A673 (cell line): ENCODE measurements at regions of chr19 and their contacts with region 1.

Region 1: GRCh38 chr19:13718733-13719132 is 45.6 kb upstream of the MRI1 start:
- DNase-seq: peak; percentile 91
- H3K4me3 ChIP-seq: no peak overlapping the region
- H3K27ac ChIP-seq: no peak overlapping the region
- H3K4me1 ChIP-seq: no peaks in the 10 kb centered on the region
- H3K27me3 ChIP-seq: no peaks in the 10 kb centered on the region
- CTCF ChIP-seq: peak; percentile 67

Region 2: DNA sequence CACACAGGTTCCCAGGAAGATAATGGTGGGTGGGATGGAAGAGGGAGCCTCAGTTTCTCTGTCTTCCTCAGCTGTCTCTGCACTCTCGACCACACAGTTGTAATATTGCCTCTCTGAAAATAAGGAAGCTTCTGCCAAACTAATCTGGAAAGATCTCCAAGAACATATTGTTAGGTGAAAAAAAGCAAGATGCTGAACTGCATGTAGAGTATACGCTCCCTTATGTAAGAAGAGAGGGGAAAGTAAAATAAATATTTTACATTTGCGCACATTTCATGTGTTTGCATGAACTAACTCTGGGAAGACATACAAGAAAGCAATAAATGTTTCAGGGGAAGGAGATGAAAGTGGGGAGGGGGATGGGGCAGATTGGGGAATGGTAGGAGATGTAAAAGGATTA is 170.6 kb before region 1 on chr19:
- CTCF ChIA-PET with region 1: no interaction called
- POLR2A ChIA-PET with region 1: no interaction called
- intact Hi-C with region 1: no loop called
- DNase-seq: no peak
- H3K4me3 ChIP-seq: no peak overlapping the region
- H3K27ac ChIP-seq: no peak overlapping the region
- H3K4me1 ChIP-seq: no peaks in the 10 kb centered on the region
- H3K27me3 ChIP-seq: peaks cover 3% of the 10 kb centered on the region
- CTCF ChIP-seq: no peak

Region 3: DNA sequence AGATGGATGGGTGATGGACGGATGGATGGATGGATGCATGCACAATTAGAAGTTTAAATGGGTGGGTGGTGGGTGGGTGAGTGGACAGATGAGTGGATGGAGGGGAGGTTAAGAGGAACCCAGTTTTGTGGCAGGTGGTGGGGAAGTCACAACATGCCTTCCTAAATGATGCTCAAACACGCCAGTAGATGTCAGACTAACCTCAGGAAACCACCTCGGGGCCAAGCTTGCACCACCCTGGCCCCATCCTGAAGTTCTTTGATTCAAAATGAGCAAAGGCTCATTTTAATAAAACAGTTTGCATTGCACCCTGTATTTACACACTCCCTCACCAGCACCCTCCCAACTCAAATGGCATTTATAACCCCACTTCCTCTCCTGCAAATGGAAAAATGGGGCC is 121.1 kb before region 1 on chr19:
- CTCF ChIA-PET with region 1: interaction called, 9 read pairs
- POLR2A ChIA-PET with region 1: no interaction called
- intact Hi-C with region 1: loop called (anchors 1 kb)
- DNase-seq: peak; percentile 82
- H3K4me3 ChIP-seq: no peak overlapping the region
- H3K27ac ChIP-seq: no peak overlapping the region
- H3K4me1 ChIP-seq: peaks cover 5% of the 10 kb centered on the region
- H3K27me3 ChIP-seq: no peaks in the 10 kb centered on the region
- CTCF ChIP-seq: peak; percentile 68

Region 4: DNA sequence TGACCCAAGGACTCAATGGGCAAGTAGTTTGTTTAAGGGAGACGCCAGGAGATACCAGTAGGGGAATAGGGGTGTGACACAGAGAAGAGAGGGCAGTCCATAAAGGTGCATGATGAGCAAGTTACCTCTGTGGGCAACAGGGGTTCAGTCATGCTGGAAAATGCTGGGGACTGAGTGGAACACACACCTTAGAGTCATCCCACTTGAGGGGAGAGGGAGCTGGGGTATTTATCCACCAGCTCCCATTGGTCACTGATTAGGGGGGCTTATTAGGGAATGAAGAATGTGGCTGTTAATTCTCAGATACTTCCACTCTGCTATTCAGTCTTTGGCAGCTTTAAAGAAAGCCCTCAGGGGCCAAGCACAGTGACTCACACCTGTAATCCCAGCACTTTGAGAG is 21.9 kb before region 1 on chr19:
- CTCF ChIA-PET with region 1: interaction called, 11 read pairs
- POLR2A ChIA-PET with region 1: no interaction called
- intact Hi-C with region 1: no loop called
- DNase-seq: no peak
- H3K4me3 ChIP-seq: no peak overlapping the region
- H3K27ac ChIP-seq: no peak overlapping the region
- H3K4me1 ChIP-seq: peaks cover 13% of the 10 kb centered on the region
- H3K27me3 ChIP-seq: no peaks in the 10 kb centered on the region
- CTCF ChIP-seq: no peak